SK-N-SH (cell line): ENCODE measurements at regions of chr5 and their contacts with region 1.

Region 1: GRCh38 chr5:150350524-150351344 is 6.8 kb upstream of the TCOF1 start:
- DNase-seq: peak; percentile 82
- H3K4me3 ChIP-seq: no peak overlapping the region
- H3K27ac ChIP-seq: no peak overlapping the region
- H3K4me1 ChIP-seq: peaks cover 0 to 12% of the 10 kb centered on the region in 2 experiments; a peak in 2 of 4 replicates
- H3K27me3 ChIP-seq: no peaks in the 10 kb centered on the region
- CTCF ChIP-seq: peak; percentile 85
- EP300 ChIP-seq: no peak
- RAD21 ChIP-seq: peak; percentile 89

Region 2: GRCh38 chr5:150234576-150235499 is 115.9 kb before region 1 on chr5:
- CTCF ChIA-PET with region 1: interaction called, 11 read pairs
- POLR2A ChIA-PET with region 1: no interaction called
- DNase-seq: no peak
- H3K4me3 ChIP-seq: no peak overlapping the region
- H3K27ac ChIP-seq: no peak overlapping the region
- H3K4me1 ChIP-seq: no peaks in the 10 kb centered on the region; a peak in 1 of 4 replicates
- H3K27me3 ChIP-seq: no peaks in the 10 kb centered on the region
- CTCF ChIP-seq: no peak
- EP300 ChIP-seq: no peak
- RAD21 ChIP-seq: no peak

Region 3: GRCh38 chr5:150272526-150272925 is 78.2 kb before region 1 on chr5:
- CTCF ChIA-PET with region 1: interaction called, 109 read pairs
- POLR2A ChIA-PET with region 1: no interaction called
- DNase-seq: peak; percentile 67
- H3K4me3 ChIP-seq: no peak overlapping the region
- H3K27ac ChIP-seq: no peak overlapping the region
- H3K4me1 ChIP-seq: peaks cover 7 to 9% of the 10 kb centered on the region in 2 experiments; a peak in 3 of 4 replicates
- H3K27me3 ChIP-seq: no peaks in the 10 kb centered on the region
- CTCF ChIP-seq: peak; percentile 64
- EP300 ChIP-seq: no peak
- RAD21 ChIP-seq: peak; percentile 88

Region 4: DNA sequence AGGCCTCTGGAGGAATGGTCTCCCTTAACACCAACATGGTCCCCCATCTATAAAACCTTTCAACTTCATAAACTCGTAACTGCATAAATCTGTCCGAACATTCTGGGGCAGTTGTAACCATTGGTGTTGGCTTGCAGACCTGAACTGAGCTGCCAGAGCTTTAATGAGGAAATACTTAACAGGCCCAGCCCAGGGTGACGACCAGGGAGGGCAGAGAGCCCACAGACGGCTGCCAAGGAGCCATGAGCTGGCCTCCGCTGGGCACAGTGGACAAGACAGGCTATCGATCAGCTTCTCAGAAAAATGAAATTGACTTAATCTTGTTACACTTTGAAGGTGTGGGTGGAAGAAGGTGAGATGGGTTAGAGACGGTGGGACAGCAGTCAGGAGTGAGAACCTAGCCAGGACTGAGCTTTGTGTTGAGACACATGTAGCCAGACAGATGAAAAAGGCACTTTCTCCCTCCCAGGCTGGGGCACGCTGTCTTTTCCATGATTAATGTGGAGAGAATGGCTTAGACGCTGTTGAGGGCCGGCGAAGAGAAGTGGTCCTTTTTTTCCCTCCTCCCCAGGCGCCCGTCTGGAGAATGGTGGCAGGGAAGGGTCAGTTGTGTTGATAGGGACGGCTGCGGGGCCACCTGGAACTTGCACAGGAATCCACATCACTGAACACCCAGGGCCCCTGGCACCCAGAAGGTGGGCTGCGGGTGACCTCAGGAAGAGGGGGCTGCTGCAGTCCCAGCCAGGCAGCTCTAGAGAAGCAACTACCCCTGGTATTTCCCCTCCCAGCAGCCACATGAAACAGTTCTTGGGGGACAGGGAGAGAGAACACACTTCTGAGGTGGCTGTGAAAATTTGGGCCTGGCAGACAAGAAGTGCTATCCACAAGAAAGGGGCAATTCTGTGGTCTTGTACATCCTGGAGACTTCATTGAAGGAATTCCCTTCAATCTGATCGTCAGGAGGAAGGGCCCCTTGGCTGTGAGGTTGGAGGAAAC is 20.6 kb before region 1 on chr5:
- CTCF ChIA-PET with region 1: interaction called, 27 read pairs
- POLR2A ChIA-PET with region 1: interaction called, 3 read pairs
- DNase-seq: no peak
- H3K4me3 ChIP-seq: no peak overlapping the region
- H3K27ac ChIP-seq: no peak overlapping the region
- H3K4me1 ChIP-seq: peaks cover 0 to 4% of the 10 kb centered on the region in 2 experiments; a peak in 1 of 4 replicates
- H3K27me3 ChIP-seq: no peaks in the 10 kb centered on the region
- CTCF ChIP-seq: no peak
- EP300 ChIP-seq: no peak
- RAD21 ChIP-seq: no peak

Region 5: DNA sequence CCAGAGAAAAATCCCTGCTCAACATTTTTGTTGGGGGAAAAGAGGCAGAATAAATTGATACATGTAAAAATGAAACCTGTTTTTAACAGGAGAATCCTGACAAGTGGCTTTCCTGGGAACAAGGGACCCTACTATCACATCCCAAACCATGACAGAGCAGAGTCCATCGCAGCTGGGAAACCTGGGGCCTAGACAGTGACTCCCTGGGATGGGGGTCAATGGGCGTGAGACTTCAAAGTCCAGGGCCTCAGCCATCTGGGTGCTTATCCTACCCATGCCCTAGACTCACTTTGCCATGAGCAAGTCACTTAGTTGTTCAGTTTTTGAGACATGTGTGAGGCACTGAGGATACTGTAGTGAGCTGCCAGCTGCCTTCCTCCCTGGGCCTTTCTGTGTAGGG is 12.5 kb after region 1 on chr5:
- CTCF ChIA-PET with region 1: interaction called, 17 read pairs
- POLR2A ChIA-PET with region 1: no interaction called
- DNase-seq: no peak
- H3K4me3 ChIP-seq: no peak overlapping the region
- H3K27ac ChIP-seq: no peak overlapping the region
- H3K4me1 ChIP-seq: peaks cover 0 to 11% of the 10 kb centered on the region in 2 experiments; a peak in 1 of 4 replicates
- H3K27me3 ChIP-seq: no peaks in the 10 kb centered on the region
- CTCF ChIP-seq: no peak
- EP300 ChIP-seq: no peak
- RAD21 ChIP-seq: no peak

Region 6: DNA sequence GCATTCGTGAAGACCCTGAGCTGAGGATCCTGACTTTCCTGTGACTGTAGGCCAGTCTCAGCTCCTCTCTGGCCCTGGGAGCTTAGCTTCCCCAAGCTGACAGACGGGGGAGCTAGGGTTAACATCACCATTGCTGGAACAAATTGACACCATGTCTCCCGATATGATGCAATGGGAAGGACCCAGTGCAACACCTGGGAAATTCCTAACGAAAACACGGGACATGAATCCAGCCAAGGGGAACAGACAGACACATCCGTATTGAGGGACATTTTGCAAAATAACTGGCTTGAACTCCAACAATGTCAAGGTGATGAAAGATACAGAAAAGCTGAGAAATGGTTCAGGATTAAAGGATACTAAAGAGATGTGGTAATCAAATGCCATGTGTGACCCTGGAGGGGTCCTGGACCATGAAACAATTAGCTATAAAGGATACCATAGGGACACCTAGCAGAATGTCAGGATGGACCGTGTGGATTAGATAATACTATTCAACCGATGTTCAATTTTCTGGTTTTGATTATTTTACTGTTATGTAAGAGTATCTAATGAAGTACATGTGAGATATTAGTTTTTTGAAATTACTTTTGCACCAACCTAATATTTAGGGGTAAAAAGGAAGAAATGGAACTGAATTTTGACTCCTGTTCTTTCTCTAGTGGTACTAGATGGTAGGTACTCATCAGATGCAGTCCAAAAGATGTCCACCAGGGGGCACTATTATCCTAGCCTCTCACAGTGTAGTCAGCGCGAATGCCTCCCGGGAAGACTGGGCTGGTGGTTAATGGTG is 209.9 kb after region 1 on chr5:
- CTCF ChIA-PET with region 1: no interaction called
- POLR2A ChIA-PET with region 1: no interaction called
- DNase-seq: peak; percentile 82
- H3K4me3 ChIP-seq: no peak overlapping the region; a peak in 1 of 4 replicates
- H3K27ac ChIP-seq: no peak overlapping the region
- H3K4me1 ChIP-seq: peaks cover 6 to 13% of the 10 kb centered on the region in 2 experiments; a peak in 2 of 4 replicates
- H3K27me3 ChIP-seq: no peaks in the 10 kb centered on the region
- CTCF ChIP-seq: peak; percentile 87
- EP300 ChIP-seq: no peak
- RAD21 ChIP-seq: peak; percentile 98